ENCODE measurements at regions of chr1 and their contacts with region 1.

Region 1: GRCh38 chr1:53238197-53239155 is at the start of gene MAGOH:
- DNase-seq: peak; percentile 82
- ATAC-seq: peak; percentile 99
- H3K4me3 ChIP-seq: peak within 1 kb of the TSS; percentile 82 to 83
- H3K27ac ChIP-seq: peak within 1 kb of the TSS; percentile 95
- H3K4me1 ChIP-seq: peaks cover 16% of the 10 kb centered on the region
- H3K27me3 ChIP-seq: no peaks in the 10 kb centered on the region
- CTCF ChIP-seq: no peak
- total RNA-seq, gene MAGOH: 63.8 TPM

Region 2: DNA sequence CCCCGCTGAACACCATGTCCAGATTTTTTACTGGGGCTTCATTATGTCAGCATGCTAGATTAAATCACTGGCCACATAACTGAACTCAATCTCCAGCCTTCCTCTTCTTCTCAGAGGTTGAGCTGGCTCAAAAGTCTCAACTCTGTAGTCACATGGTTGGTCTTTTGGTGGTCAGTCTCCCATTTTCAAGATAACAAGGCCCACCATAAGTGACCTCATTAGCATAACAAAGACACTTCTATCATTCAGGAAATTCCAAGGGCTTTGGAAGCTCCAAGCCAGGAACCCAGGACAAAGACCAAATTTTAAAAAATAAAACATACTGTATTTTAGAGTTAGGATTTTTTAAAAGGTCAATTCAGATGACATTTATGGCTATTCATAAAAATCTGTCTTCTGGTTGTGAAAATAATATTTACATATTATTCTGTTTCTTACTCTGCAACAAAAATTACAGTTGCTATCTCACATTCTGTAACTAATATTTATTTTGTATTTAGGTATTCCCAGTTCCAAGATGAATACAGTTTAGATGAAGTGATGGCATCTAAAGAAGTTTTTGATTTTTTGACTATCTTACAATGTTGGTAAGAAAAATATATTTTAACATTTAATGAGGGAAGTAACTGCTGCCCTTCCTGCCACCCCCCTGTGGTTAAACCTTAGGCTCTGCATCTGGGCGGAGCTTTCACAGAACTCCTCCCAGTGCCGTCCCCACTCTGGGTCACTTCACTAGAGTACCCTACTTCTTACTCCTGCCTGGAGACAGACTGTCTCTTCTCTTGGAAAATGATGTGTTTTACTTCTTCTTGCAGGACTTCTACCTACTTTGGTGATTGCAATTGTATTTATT is 262.1 kb before region 1 on chr1:
- CTCF ChIA-PET with region 1: no interaction called
- POLR2A ChIA-PET with region 1: interaction called, 13 read pairs
- in situ Hi-C with region 1: no loop called
- intact Hi-C with region 1: no loop called
- DNase-seq: no peak
- ATAC-seq: no peak
- H3K4me3 ChIP-seq: no peak overlapping the region
- H3K27ac ChIP-seq: no peak overlapping the region
- H3K4me1 ChIP-seq: no peaks in the 10 kb centered on the region
- H3K27me3 ChIP-seq: no peaks in the 10 kb centered on the region
- CTCF ChIP-seq: no peak

Region 3: GRCh38 chr1:53196485-53197270 is 41.8 kb before region 1 on chr1 and contains the start of gene CPT2:
- CTCF ChIA-PET with region 1: no interaction called
- POLR2A ChIA-PET with region 1: interaction called, 12 read pairs
- in situ Hi-C with region 1: no loop called
- intact Hi-C with region 1: no loop called
- DNase-seq: no peak
- ATAC-seq: peak; percentile 100
- H3K4me3 ChIP-seq: peak within 1 kb of the TSS; percentile 91 to 97
- H3K27ac ChIP-seq: peak within 1 kb of the TSS; percentile 97
- H3K4me1 ChIP-seq: peaks cover 15% of the 10 kb centered on the region
- H3K27me3 ChIP-seq: no peaks in the 10 kb centered on the region
- CTCF ChIP-seq: no peak
- total RNA-seq, gene CPT2: 18.9 TPM

Region 4: GRCh38 chr1:53266106-53266505 is 27.6 kb after region 1 on chr1:
- CTCF ChIA-PET with region 1: no interaction called
- POLR2A ChIA-PET with region 1: no interaction called
- in situ Hi-C with region 1: no loop called
- intact Hi-C with region 1: no loop called
- DNase-seq: no peak
- ATAC-seq: peak; percentile 69
- H3K4me3 ChIP-seq: no peak overlapping the region
- H3K27ac ChIP-seq: no peak overlapping the region
- H3K4me1 ChIP-seq: no peaks in the 10 kb centered on the region
- H3K27me3 ChIP-seq: no peaks in the 10 kb centered on the region
- CTCF ChIP-seq: peak; percentile 70; the same call in 1 of the 2 replicates

Region 5: DNA sequence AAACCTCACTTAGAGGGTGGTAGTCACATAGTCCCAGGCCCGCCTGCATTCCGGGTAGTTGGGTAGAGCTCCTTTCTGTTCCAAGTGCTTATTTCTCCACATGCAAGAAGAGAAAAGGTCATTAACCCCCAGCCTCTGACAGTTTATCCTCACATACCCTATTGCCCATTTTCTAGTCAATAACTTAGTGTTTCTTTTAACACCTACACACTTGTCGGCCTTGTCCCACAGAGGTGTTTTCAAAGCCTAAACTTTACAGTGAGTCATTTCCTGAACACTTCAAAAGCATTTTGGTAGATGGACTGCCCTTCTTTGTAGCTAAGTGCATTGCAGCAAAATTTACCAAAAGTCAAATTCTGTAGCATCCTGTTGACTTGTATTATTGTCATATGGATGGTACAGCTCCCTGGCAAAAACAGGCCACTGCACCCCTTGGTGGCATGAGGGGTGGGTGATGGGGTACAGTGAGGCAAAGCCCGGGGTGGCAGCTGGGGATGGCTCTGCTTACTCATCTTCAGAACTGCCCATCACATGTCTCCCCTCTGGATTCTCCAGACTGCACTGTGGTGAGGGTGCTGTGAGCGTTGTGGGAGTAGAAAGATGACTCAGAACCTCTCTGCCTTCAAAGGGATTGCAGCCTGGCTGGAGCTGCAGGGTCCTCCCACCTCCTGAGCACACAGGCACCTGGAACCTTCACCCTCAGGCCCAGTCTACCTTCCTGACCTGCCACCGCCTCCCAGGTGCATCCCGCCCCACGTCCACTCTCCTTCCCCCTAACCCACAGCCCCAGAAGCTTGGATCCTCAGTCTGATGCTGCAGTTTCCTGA is 174.9 kb after region 1 on chr1:
- CTCF ChIA-PET with region 1: no interaction called
- POLR2A ChIA-PET with region 1: no interaction called
- in situ Hi-C with region 1: no loop called
- intact Hi-C with region 1: no loop called
- DNase-seq: peak; percentile 82
- ATAC-seq: peak; percentile 84
- H3K4me3 ChIP-seq: no peak overlapping the region
- H3K27ac ChIP-seq: no peak overlapping the region
- H3K4me1 ChIP-seq: peaks cover 14% of the 10 kb centered on the region
- H3K27me3 ChIP-seq: no peaks in the 10 kb centered on the region
- CTCF ChIP-seq: no peak